A673 (cell line): ENCODE measurements at regions of chr3 and their contacts with region 1.

Region 1: GRCh38 chr3:98596541-98597500 is 3.4 kb upstream of the CPOX start:
- DNase-seq: peak; percentile 64
- H3K4me3 ChIP-seq: no peak overlapping the region
- H3K27ac ChIP-seq: no peak overlapping the region
- H3K4me1 ChIP-seq: peaks cover 5% of the 10 kb centered on the region
- H3K27me3 ChIP-seq: no peaks in the 10 kb centered on the region
- CTCF ChIP-seq: peak; percentile 66

Region 2: DNA sequence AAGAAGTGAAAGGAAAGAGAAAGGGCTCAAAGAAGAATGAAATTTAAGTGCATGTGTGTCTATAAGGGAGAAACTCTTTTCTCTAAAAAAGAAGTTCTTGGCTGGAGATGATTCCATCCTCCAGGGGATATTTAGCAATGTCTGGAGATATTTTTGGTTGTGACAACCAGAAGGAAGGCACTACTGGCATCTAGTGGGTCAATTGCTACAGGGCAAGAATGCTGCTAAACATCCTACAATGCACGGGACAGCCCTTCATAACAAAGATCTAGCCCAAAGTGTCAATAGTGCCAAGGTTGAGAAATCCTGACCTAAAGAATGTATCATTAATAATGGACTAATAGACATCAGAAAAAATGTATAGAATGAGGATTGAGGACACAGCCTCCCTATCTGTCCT is 108.9 kb after region 1 on chr3:
- CTCF ChIA-PET with region 1: interaction called, 4 read pairs
- POLR2A ChIA-PET with region 1: no interaction called
- intact Hi-C with region 1: loop called (anchors 5 kb)
- DNase-seq: peak; percentile 33
- H3K4me3 ChIP-seq: no peak overlapping the region
- H3K27ac ChIP-seq: no peak overlapping the region
- H3K4me1 ChIP-seq: peaks cover 23% of the 10 kb centered on the region
- H3K27me3 ChIP-seq: no peaks in the 10 kb centered on the region
- CTCF ChIP-seq: peak; percentile 35

Region 3: GRCh38 chr3:98999675-99000074 is 402.9 kb after region 1 on chr3:
- CTCF ChIA-PET with region 1: interaction called, 4 read pairs
- POLR2A ChIA-PET with region 1: no interaction called
- intact Hi-C with region 1: loop called (anchors 5 kb)
- DNase-seq: no peak
- H3K4me3 ChIP-seq: no peak overlapping the region
- H3K27ac ChIP-seq: no peak overlapping the region
- H3K4me1 ChIP-seq: no peaks in the 10 kb centered on the region
- H3K27me3 ChIP-seq: no peaks in the 10 kb centered on the region
- CTCF ChIP-seq: no peak